RWPE1 (cell line): ENCODE measurements at regions of chr12 and their contacts with region 1.

Region 1: DNA sequence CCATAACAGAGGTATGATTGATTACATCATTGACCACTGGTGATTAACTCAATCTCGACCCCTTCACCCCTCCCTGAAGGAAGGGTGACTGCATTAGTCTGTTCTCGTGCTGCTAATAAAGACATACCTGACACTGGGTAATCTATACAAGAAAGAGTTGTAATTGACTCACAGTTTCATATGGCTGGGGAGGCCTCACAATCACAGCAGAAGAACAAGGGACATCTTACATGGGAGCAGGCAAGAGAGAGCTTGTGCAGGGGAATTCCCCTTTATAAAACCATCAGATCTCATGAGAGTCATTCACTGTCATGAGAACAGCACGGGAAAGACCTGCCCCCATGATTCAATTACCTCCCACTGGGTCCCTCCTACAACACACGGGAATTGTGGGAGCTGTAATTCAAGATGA is 55.9 kb upstream of the TMCC3 start:
- DNase-seq: no peak
- H3K27ac ChIP-seq: no peak overlapping the region
- CTCF ChIP-seq: no peak

Region 2: DNA sequence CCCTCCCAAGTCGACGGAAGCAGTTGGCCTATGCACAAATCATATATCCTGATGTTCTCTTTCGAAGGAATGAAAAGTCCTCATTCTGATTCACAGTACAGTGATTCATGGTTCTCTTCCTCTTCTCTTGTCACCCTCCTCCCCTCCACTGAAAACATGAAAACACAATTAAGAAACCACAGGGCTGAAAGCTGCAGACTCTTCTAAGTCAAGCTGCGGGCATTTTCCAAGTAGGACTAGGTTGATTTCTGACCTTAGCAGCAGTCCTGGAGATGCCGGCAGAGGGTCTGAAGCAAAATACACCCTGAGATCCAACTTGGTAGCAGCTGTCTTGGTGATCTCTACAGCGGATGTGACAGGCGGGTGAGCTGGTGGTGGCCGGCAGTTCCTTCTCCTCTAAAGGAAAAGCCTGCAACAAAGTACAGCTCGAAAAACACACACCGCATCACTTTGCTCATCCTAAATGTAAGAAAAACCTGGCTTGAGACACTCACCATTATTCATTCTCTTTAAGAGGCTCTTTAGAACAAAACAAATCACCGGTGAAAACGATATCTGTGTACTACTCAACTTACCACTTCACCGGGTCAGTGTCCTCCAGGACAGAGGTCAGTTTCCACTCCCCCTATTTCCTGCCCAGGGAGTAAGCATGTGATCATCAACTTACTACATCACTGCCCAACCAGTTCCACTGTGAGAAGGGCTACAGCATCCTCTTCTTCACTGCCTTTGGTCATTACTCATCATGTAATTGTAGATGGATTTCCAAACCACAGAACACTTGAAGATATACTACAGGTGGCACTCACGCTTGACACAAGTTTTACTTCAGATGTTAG is 61.9 kb before region 1 on chr12:
- CTCF ChIA-PET with region 1: no interaction called
- POLR2A ChIA-PET with region 1: no interaction called
- DNase-seq: peak; percentile 65
- H3K27ac ChIP-seq: 0 out of 2 replicates have a peak overlapping the region, but pooled peaks have one; percentile 30
- CTCF ChIP-seq: no peak

Region 3: DNA sequence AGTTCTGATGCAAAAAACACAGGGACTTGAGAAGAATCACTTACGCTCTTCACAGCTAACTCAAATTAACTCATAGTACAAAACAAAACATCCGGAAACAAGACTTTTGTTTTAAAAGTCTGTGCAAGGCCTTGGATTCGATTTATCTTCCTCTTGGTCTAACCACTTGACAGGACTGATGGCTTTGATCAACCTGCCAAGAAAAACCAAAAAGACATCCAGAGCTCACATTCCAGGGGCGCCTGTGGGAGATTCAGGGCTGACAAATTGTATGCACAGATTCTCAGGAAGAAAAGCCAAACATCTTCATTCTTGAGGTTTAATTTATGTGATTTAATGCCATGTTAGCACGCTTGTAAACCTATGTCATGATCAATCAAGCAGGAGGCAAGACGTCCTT is 73.2 kb after region 1 on chr12:
- CTCF ChIA-PET with region 1: no interaction called
- POLR2A ChIA-PET with region 1: interaction called, 11 read pairs
- DNase-seq: no peak
- H3K27ac ChIP-seq: no peak overlapping the region
- CTCF ChIP-seq: no peak

Region 4: DNA sequence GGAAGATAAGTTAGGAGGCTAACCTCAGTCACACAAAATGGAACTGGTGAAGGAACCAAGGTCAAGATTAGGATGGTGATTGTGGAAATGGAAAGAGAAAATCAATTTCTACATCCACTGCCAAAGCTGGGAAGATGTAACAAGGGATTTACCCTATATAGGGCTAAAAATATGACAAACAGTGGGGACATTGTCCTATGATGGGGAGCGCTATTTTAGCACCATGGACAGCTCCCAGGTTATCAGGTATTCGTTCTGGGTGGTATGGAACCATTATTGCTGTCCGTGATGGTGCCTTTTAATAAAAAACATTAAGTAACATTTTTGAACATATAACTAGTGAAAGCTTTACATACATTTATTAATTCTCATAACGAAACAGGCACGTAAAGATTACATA is 173.3 kb after region 1 on chr12:
- CTCF ChIA-PET with region 1: no interaction called
- POLR2A ChIA-PET with region 1: no interaction called
- DNase-seq: no peak
- H3K27ac ChIP-seq: no peak overlapping the region
- CTCF ChIP-seq: no peak